ENCODE measurements at regions of chr4 and their contacts with region 1.

Region 1: GRCh38 chr4:173420324-173420752 is 21.4 kb upstream of the SCRG1 start:
- DNase-seq: peak; percentile 42
- ATAC-seq: no peak
- H3K4me3 ChIP-seq: no peak overlapping the region
- H3K27ac ChIP-seq: no peak overlapping the region
- H3K4me1 ChIP-seq: peaks cover 35% of the 10 kb centered on the region
- H3K27me3 ChIP-seq: no peaks in the 10 kb centered on the region
- CTCF ChIP-seq: peak; percentile 64

Region 2: DNA sequence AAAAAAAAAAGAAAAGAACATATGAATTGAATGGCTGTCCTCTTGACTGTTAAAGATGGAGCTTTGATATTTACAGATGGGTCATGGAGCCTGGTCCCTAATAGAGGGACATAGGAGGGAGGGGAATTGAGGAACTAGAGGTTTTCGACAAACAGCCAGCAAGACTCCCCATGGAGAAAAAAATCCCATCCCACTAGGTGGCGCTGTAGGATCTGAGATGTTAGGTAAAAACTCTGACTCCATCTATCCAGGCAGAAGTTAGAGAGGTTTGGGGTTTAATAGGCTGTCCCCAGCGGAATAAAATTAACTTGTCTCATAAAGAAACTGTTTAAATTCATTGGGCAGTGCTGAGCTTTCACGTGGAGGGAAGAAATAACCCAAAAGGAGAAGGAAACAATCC is 132.0 kb before region 1 on chr4:
- CTCF ChIA-PET with region 1: no interaction called
- POLR2A ChIA-PET with region 1: no interaction called
- intact Hi-C with region 1: no loop called
- DNase-seq: peak; percentile 72
- ATAC-seq: no peak
- H3K4me3 ChIP-seq: no peak overlapping the region
- H3K27ac ChIP-seq: no peak overlapping the region
- H3K4me1 ChIP-seq: no peaks in the 10 kb centered on the region
- H3K27me3 ChIP-seq: no peaks in the 10 kb centered on the region
- CTCF ChIP-seq: peak; percentile 67

Region 3: GRCh38 chr4:173318648-173319211 is 101.6 kb before region 1 on chr4:
- CTCF ChIA-PET with region 1: interaction called, 6 read pairs
- POLR2A ChIA-PET with region 1: no interaction called
- intact Hi-C with region 1: loop called (anchors 1 kb)
- DNase-seq: peak; percentile 56
- ATAC-seq: peak; percentile 67
- H3K4me3 ChIP-seq: no peak overlapping the region
- H3K27ac ChIP-seq: no peak overlapping the region
- H3K4me1 ChIP-seq: peaks cover 9% of the 10 kb centered on the region
- H3K27me3 ChIP-seq: no peaks in the 10 kb centered on the region
- CTCF ChIP-seq: 0 out of 2 replicates have a peak, but pooled peaks have one; percentile 18

Region 4: DNA sequence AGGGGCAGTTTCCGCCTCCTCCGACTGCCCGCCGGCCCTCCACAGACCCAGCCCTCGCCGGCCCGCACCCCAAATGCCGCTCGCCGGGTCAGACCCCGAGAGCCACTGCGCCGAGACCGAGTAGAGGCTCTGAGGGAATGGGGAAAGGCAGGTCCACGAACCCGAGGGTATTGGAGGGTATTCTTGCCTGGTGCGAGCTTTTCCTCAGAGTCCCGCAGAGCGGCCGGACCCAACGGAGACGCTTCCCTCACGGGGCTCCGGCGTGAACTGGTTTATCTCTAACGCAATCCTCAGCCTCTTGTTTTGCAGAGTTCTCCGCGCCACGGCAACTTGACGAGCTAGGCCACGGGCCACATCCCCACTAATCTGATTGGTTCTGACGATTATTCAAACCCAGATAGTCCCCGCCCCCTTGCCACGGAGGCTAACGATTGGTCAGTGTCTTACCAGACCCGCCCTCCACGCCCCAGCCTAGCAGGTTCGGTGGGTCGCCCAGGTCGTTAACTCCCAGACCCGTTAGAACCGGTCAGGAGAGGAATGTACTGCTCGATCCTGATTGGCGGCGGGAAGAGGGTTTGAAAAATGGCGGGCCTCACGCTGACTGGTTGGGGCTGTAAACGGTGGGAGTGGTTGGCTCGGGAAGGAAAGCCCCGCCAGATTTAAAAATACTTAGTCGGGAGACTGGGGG is 86.1 kb before region 1 on chr4 and contains the start of gene HMGB2:
- CTCF ChIA-PET with region 1: interaction called, 3 read pairs
- POLR2A ChIA-PET with region 1: interaction called, 4 read pairs
- intact Hi-C with region 1: loop called (anchors 2 kb)
- DNase-seq: peak; percentile 98
- ATAC-seq: peak; percentile 84
- H3K4me3 ChIP-seq: peak within 1 kb of the TSS; percentile 91
- H3K27ac ChIP-seq: peak within 1 kb of the TSS; percentile 91
- H3K4me1 ChIP-seq: peaks cover 27% of the 10 kb centered on the region
- H3K27me3 ChIP-seq: no peaks in the 10 kb centered on the region
- CTCF ChIP-seq: no peak
- total RNA-seq, gene HMGB2: 111 and 139 TPM in 2 replicates

Region 5: GRCh38 chr4:173370477-173371291 is 49.7 kb before region 1 on chr4 and contains the start of gene SAP30:
- CTCF ChIA-PET with region 1: no interaction called
- POLR2A ChIA-PET with region 1: no interaction called
- intact Hi-C with region 1: loop called (anchors 5 kb)
- DNase-seq: peak; percentile 92
- ATAC-seq: peak; percentile 76
- H3K4me3 ChIP-seq: peak within 1 kb of the TSS; percentile 90
- H3K27ac ChIP-seq: peak within 1 kb of the TSS; percentile 59
- H3K4me1 ChIP-seq: peaks cover 18% of the 10 kb centered on the region
- H3K27me3 ChIP-seq: no peaks in the 10 kb centered on the region
- CTCF ChIP-seq: no peak
- total RNA-seq, gene SAP30: 33.2 and 38.8 TPM in 2 replicates

Region 6: GRCh38 chr4:173494013-173494970 is 74.0 kb after region 1 on chr4:
- CTCF ChIA-PET with region 1: interaction called, 11 read pairs
- POLR2A ChIA-PET with region 1: no interaction called
- intact Hi-C with region 1: loop called (anchors 1 kb)
- DNase-seq: peak; percentile 74
- ATAC-seq: peak; percentile 93
- H3K4me3 ChIP-seq: peak overlapping the region; percentile 67
- H3K27ac ChIP-seq: no peak overlapping the region
- H3K4me1 ChIP-seq: peaks cover 14% of the 10 kb centered on the region
- H3K27me3 ChIP-seq: peaks cover 14% of the 10 kb centered on the region
- CTCF ChIP-seq: peak; percentile 82